Calu3 (cell line): ENCODE measurements at regions of chr22 and their contacts with region 1.

Region 1: GRCh38 chr22:32528984-32529982 is 54.7 kb downstream of the FBXO7 start:
- DNase-seq: peak; percentile 81
- H3K4me3 Mint-ChIP-seq: no peak overlapping the region
- H3K27ac Mint-ChIP-seq: no peak overlapping the region
- H3K4me1 Mint-ChIP-seq: peaks cover 29% of the 10 kb centered on the region
- H3K27me3 Mint-ChIP-seq: no peaks in the 10 kb centered on the region
- CTCF ChIP-seq: peak; percentile 87

Region 2: GRCh38 chr22:32579509-32580234 is 50.4 kb after region 1 on chr22:
- CTCF ChIA-PET with region 1: interaction called, 5 read pairs
- intact Hi-C with region 1: loop called (anchors 10 kb)
- DNase-seq: no peak
- H3K4me3 Mint-ChIP-seq: no peak overlapping the region
- H3K27ac Mint-ChIP-seq: no peak overlapping the region
- H3K4me1 Mint-ChIP-seq: peaks cover 29% of the 10 kb centered on the region
- H3K27me3 Mint-ChIP-seq: no peaks in the 10 kb centered on the region
- CTCF ChIP-seq: no peak

Region 3: GRCh38 chr22:32796865-32797573 is 267.7 kb after region 1 on chr22:
- CTCF ChIA-PET with region 1: interaction called, 33 read pairs
- intact Hi-C with region 1: loop called (anchors 1 kb)
- DNase-seq: peak; percentile 71
- H3K4me3 Mint-ChIP-seq: no peak overlapping the region
- H3K27ac Mint-ChIP-seq: no peak overlapping the region
- H3K4me1 Mint-ChIP-seq: no peaks in the 10 kb centered on the region
- H3K27me3 Mint-ChIP-seq: peaks cover 31% of the 10 kb centered on the region
- CTCF ChIP-seq: peak; percentile 92

Region 4: DNA sequence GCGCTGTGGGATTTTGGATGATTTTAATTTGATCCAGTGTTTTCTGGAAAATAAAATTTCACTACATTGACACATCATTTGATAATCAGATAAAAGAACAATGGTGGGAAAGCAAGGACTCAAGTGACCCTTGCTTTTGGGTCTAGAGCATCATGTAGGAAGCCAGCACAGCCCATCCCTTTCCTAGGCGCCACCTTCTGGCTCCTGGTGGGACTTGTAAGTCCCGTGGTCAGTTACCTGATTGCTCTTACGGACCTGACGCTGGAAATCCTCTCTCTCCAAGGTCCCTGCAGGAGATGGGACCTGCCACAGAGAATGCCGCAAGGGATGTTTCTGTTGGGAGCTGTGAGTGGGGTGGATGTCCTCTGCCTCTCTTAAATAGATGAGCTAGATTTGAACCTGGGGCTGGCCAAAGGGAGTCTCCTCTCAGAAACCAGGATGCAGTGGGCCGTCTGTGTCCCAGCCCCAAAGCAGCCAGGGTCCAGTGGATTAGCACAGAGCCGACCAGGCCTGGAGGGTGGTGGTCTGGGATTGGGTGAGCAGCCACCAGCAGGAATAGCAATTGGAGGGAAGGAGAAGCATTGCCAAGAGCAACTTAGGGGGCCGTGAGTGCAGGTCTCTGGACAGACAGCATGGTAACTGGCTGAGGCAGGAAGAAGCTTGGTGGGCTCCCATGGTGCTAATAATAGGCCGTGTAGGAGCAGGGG is 293.9 kb after region 1 on chr22:
- CTCF ChIA-PET with region 1: interaction called, 4 read pairs
- intact Hi-C with region 1: loop called (anchors 1 kb)
- DNase-seq: peak; percentile 69
- H3K4me3 Mint-ChIP-seq: no peak overlapping the region
- H3K27ac Mint-ChIP-seq: no peak overlapping the region
- H3K4me1 Mint-ChIP-seq: no peaks in the 10 kb centered on the region
- H3K27me3 Mint-ChIP-seq: no peaks in the 10 kb centered on the region
- CTCF ChIP-seq: peak; percentile 48

Region 5: DNA sequence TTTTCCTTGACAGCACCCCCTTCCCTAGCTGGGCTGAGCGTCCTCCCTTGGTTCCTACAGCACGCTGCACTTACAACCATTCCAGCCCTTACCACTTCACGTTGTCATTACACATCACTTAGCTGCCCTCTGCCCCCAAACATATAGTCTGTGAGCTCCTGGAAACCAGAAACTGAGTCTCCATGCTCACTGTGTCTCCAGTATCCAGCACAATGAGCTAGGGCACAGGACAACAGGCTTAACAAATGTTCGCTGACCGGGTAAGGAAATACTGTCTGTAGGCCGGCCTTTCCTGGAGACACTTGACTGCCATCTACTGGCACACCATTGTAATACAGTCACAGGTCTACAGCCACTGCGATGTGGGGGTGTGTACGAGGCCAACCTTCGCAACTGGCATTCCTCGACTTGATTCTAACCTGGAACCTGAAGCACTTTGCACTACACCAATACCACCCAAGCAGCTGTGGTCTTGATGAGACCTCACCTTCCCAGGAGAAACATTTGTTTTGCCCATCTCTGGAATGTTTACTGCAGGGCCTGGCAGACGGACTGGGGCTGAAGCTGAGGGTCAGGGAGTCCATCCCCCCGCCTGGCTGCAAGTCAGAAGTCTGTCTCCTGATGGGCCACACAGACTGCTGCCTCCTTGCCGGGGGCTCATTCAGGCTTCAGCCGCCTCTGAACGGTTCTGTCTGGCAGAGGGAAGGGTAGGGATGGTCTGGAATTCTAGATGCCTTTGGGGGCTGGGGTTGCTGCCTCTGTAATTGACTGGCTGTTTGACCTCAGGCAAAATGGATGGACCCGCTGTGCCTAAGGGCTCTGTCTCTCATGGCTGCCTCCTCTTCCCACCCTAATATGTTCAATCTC is 456.8 kb after region 1 on chr22:
- CTCF ChIA-PET with region 1: interaction called, 5 read pairs
- intact Hi-C with region 1: loop called (anchors 5 kb)
- DNase-seq: peak; percentile 79
- H3K4me3 Mint-ChIP-seq: no peak overlapping the region
- H3K27ac Mint-ChIP-seq: no peak overlapping the region
- H3K4me1 Mint-ChIP-seq: peaks cover 6% of the 10 kb centered on the region
- H3K27me3 Mint-ChIP-seq: peaks cover 14% of the 10 kb centered on the region
- CTCF ChIP-seq: peak; percentile 70

Region 6: DNA sequence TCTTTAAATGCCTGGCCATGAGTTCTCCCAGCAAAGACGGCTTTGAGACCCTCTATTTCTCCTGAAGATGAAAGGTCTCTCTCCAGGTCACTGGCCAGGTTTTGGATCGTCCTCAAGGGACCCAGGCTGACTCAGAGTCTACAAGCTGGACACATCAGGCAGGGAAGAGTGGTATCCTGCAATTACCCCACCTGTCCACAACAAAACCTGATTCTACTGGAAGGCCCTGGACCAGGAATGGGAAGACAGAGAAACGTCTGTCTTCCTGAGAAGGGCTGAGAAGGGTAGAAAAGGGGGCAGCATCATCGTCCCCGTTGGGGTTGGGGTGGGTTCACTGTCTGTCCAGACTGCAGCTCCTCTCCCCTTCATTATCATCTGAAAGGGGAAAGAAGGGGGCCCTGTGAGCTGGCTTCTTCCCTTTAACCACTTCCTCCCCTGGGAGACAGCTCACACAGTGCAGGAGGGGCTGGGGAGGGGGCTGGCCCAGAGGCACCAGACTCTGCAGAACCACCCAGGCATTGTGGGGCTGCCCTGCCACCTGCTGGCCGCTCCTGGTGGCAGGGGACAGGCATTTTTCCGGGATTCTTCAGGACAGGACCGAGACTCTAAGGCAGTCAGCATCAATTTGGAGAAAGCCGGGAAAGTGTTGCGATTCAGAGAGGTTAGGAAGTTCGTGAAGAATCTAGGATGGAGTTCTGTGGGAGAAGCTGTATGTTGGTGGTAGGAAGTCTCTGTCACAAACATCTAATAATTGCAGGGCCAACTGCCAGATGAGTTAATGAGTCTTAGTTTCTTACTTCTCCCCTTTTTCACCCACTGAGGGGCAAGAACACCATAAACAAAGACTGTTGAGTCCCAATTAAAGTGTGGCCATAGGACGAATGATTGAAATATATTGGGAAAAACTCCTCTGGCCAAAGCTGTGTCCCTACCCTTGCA is 471.3 kb after region 1 on chr22:
- CTCF ChIA-PET with region 1: no interaction called
- intact Hi-C with region 1: loop called (anchors 5 kb)
- DNase-seq: peak; percentile 71
- H3K4me3 Mint-ChIP-seq: no peak overlapping the region
- H3K27ac Mint-ChIP-seq: no peak overlapping the region
- H3K4me1 Mint-ChIP-seq: no peaks in the 10 kb centered on the region
- H3K27me3 Mint-ChIP-seq: peaks cover 70% of the 10 kb centered on the region
- CTCF ChIP-seq: peak; percentile 73

Region 7: DNA sequence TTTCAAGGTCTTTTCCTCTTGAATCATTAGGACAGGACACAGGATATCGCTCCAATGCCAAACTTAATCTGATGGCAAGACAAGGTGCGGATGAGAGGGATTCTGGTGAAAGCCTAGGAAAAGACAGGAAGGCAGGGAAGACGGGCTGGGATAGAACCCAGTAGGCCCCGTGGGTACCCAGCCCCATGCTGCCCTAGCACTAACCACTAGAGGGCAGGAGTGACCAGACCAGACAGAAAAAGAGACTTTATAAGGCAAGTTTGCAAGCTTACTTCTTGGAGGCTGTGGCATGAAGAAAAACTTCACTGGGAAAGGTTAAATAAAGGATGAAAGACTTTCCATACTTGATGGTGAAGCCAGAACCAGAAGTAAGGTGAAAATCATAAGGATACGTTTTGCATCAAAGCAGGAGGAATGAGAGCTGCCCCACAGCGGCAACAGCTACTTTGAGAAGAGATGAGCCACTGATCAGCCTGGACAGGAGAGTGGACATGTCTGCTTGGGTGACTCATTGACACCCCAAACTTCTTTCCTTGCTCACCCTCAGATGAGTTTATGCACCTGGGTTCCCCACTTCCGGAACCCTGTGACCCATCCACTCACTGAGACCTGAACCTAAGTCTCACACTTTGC is 489.1 kb after region 1 on chr22:
- CTCF ChIA-PET with region 1: interaction called, 11 read pairs
- intact Hi-C with region 1: no loop called
- DNase-seq: peak; percentile 77
- H3K4me3 Mint-ChIP-seq: no peak overlapping the region
- H3K27ac Mint-ChIP-seq: no peak overlapping the region
- H3K4me1 Mint-ChIP-seq: no peaks in the 10 kb centered on the region
- H3K27me3 Mint-ChIP-seq: peaks cover 29% of the 10 kb centered on the region
- CTCF ChIP-seq: peak; percentile 87